ENCODE measurements at regions of chr11 and their contacts with region 1.

Region 1: GRCh38 chr11:27991731-27992130 is 116.2 kb downstream of the KIF18A start:
- DNase-seq: no peak
- H3K4me3 ChIP-seq: no peak overlapping the region
- H3K27ac ChIP-seq: no peak overlapping the region
- H3K4me1 ChIP-seq: no peaks in the 10 kb centered on the region
- H3K27me3 ChIP-seq: no peaks in the 10 kb centered on the region
- CTCF ChIP-seq: no peak
- POLR2A ChIP-seq: no peak

Region 2: DNA sequence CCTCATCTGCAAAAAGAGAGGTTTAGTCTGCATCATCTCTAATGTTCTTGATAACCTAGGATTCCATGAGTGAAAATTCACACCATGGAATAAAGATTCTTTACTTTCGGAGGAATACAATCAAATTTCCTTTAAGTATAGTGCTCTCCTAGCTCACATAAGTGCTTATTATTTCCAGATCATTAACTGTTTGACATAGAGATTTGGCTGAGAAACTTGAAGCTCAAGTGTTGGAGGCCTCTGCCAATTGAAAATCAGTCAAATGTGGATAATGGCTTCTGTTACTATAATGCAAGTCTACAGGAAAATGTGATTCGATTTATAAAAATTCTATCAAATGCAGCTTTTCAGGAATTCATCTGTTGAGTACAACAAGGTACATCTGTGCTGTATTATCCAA is 28.4 kb before region 1 on chr11:
- intact Hi-C with region 1: no loop called
- DNase-seq: no peak
- H3K4me3 ChIP-seq: no peak overlapping the region
- H3K27ac ChIP-seq: no peak overlapping the region
- H3K4me1 ChIP-seq: no peaks in the 10 kb centered on the region
- H3K27me3 ChIP-seq: no peaks in the 10 kb centered on the region
- CTCF ChIP-seq: no peak
- POLR2A ChIP-seq: no peak

Region 3: DNA sequence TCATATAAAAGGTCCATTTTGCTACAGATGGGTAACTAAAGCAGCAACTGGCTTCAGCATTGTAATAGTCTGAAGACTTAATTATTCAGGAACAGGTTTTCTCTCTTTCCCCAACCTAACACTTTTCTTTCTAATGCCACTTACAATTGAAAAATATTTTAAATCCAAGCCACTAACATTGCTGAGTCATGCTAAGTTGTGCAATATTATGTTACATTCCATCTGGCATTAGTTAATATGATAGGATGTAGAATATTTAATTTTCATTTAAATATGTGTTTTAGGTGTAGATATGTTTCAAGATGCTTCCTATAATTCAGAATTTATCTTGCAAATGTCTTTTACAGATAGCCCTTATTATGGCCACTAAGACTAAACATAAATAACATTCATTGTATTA is 17.7 kb after region 1 on chr11:
- intact Hi-C with region 1: no loop called
- DNase-seq: no peak
- H3K4me3 ChIP-seq: no peak overlapping the region
- H3K27ac ChIP-seq: no peak overlapping the region
- H3K4me1 ChIP-seq: no peaks in the 10 kb centered on the region
- H3K27me3 ChIP-seq: no peaks in the 10 kb centered on the region
- CTCF ChIP-seq: no peak
- POLR2A ChIP-seq: no peak

Region 4: DNA sequence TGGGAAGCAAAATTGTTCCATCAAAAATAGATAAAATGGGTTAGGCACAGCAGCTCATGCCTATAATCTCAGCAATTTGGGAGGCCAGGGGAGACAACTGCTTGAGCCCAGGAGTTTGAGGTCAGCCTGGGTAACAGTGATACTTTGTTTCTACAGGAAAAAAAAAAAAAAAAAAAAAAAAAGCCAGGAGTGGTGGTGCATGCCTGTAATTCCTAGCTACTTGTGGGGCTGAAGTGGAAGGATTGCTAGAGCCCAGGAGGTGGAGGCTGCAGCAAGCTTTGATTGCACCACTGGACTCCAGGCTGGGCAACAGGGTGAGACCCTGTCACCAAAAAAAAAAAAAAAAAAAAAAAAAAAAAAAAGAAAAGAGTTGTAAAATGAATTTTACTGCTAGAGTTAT is 66.6 kb after region 1 on chr11:
- intact Hi-C with region 1: loop called (anchors 2 kb)
- DNase-seq: no peak
- H3K4me3 ChIP-seq: no peak overlapping the region
- H3K27ac ChIP-seq: no peak overlapping the region
- H3K4me1 ChIP-seq: no peaks in the 10 kb centered on the region
- H3K27me3 ChIP-seq: no peaks in the 10 kb centered on the region
- CTCF ChIP-seq: no peak
- POLR2A ChIP-seq: no peak

Region 5: DNA sequence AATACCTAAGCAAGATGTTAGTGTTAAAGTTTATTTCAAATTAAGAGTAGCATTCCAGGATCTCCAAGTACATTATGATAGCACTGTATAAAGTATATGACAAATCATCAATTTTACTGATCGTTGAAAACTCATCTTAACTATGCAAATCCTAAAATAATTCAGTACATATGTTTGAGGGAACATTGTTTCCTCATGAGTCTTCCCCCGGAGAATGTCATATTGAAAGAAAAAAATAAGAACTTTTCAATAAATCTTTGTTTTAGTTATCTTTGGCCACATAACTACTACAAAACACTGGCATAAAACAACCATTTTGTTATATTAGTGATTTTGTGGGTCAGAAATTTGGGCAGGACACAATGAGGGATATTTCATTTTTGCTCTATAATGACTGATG is 251.8 kb after region 1 on chr11:
- intact Hi-C with region 1: no loop called
- DNase-seq: no peak
- H3K4me3 ChIP-seq: no peak overlapping the region
- H3K27ac ChIP-seq: no peak overlapping the region
- H3K4me1 ChIP-seq: no peaks in the 10 kb centered on the region
- H3K27me3 ChIP-seq: no peaks in the 10 kb centered on the region
- CTCF ChIP-seq: no peak
- POLR2A ChIP-seq: no peak

Measured in breast epithelium (tissue), 4 donors.